Ascending aorta (tissue), 2 donors: ENCODE measurements at regions of chr1 and their contacts with region 1.

Region 1: GRCh38 chr1:44220001-44220733 is 6.9 kb downstream of the DMAP1 start:
- DNase-seq: no peak
- H3K4me3 ChIP-seq: no peak overlapping the region
- H3K27ac ChIP-seq: no peak overlapping the region
- H3K4me1 ChIP-seq: no peaks in the 10 kb centered on the region
- H3K27me3 ChIP-seq: no peaks in the 10 kb centered on the region
- CTCF ChIP-seq: no peak

Region 2: DNA sequence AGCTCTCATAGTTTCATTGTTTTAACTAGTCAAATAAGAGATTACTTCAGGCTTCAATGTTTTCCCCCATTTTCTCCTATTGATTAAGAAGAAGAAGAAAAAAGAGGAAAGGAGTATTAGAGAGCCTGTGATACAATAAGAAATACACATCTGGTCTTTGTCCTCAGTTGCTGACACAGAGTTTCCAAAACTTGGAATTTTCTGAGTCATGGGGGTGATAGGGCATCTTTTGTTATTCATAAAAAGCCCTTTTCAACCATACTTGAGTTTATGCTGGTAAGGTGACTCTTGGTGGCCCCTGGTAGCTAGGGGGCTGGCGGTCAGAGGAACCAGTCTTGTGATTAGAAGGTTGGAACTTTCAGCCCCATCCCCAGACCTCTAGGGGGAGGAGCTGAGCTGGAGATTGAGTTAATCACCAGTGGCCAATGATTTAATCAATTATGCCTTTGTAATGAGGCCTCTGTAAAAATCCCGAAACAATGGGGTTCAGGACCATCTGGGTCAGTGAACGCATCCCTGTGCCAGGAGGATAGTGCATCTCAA is 49.8 kb before region 1 on chr1:
- intact Hi-C with region 1: no loop called
- DNase-seq: no peak
- H3K4me3 ChIP-seq: no peak overlapping the region
- H3K27ac ChIP-seq: no peak overlapping the region
- H3K4me1 ChIP-seq: no peaks in the 10 kb centered on the region
- H3K27me3 ChIP-seq: no peaks in the 10 kb centered on the region
- CTCF ChIP-seq: no peak

Region 3: DNA sequence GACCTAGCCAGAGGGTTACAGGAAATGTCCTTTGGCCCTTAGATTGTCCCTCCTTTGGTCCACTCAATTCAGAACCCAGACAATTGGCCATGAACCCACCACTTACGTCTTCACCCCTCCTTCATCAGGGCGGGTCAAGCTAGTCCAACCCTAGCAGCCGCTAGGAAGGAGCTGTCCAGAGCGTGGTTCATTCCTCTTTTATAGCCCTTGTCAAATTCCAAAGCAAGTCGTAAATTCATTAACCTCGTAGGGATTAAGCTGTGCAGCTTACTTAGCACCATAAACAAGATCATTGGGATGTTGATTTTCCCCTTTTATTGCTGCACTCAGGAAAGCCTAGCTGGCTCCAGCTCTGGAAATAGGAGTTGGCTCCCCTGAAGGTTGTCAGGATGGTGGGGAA is 364.0 kb after region 1 on chr1:
- intact Hi-C with region 1: loop called (anchors 5 kb)
- DNase-seq: no peak
- H3K4me3 ChIP-seq: no peak overlapping the region
- H3K27ac ChIP-seq: no peak overlapping the region
- H3K4me1 ChIP-seq: no peaks in the 10 kb centered on the region
- H3K27me3 ChIP-seq: no peaks in the 10 kb centered on the region
- CTCF ChIP-seq: no peak